ENCODE measurements at regions of chr18 and their contacts with region 1.

Region 1: DNA sequence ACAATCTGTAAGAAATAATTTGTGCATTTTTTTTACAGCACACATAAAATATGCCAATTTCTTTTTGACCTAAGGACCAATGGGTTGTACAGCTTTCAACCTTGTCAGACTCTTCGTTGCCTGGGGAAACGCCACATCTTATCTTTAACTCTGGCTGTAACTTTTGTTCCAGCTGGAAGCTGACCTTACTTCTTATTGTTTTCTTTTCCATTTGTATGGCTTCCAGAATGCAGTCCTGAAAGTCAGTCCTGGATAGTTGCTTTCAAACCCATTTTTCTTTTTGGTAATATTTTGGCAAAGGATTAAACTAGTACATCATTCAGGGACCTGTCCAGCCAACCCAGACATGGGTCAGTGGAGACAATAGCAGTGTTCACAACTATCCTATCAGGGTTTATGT is 686.5 kb upstream of the CDH2 start:
- DNase-seq: no peak
- ATAC-seq: no peak
- H3K4me3 ChIP-seq: no peak overlapping the region
- H3K4me3 Mint-ChIP-seq: no peak overlapping the region
- H3K27ac ChIP-seq: no peak overlapping the region
- H3K27ac Mint-ChIP-seq: no peak overlapping the region
- H3K4me1 ChIP-seq: no peaks in the 10 kb centered on the region
- H3K4me1 Mint-ChIP-seq: no peaks in the 10 kb centered on the region
- H3K27me3 ChIP-seq: no peaks in the 10 kb centered on the region
- H3K27me3 Mint-ChIP-seq: no peaks in the 10 kb centered on the region
- CTCF ChIP-seq: no peak

Region 2: DNA sequence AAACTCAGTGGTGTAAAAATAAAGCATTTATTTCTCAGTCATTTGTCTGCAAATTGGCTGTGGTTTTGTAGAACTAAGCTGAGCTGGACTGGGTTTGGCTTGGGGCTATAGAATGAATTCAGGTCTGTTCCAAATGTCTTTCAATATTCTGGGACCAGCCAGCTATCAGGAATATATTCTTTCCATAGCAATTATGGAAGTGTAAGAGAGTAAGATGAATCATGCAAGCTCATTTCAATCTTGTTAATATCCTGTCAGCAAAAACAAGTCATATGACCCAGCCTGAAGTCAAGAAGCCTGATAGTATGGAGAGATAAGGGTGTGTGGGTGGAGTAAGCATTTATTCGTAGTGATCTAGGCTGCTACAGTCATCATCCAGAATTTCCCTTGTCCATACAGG is 205.4 kb before region 1 on chr18:
- CTCF ChIA-PET with region 1: no interaction called
- POLR2A ChIA-PET with region 1: no interaction called
- intact Hi-C with region 1: no loop called
- DNase-seq: no peak
- ATAC-seq: no peak
- H3K4me3 ChIP-seq: no peak overlapping the region
- H3K4me3 Mint-ChIP-seq: no peak overlapping the region
- H3K27ac ChIP-seq: no peak overlapping the region
- H3K27ac Mint-ChIP-seq: no peak overlapping the region
- H3K4me1 ChIP-seq: no peaks in the 10 kb centered on the region
- H3K4me1 Mint-ChIP-seq: no peaks in the 10 kb centered on the region
- H3K27me3 ChIP-seq: no peaks in the 10 kb centered on the region
- H3K27me3 Mint-ChIP-seq: no peaks in the 10 kb centered on the region
- CTCF ChIP-seq: no peak

Region 3: GRCh38 chr18:28816155-28816554 is 47.2 kb before region 1 on chr18:
- CTCF ChIA-PET with region 1: no interaction called
- POLR2A ChIA-PET with region 1: no interaction called
- intact Hi-C with region 1: loop called in 1 of 2 experiments (anchors 10 kb)
- DNase-seq: no peak
- ATAC-seq: no peak
- H3K4me3 ChIP-seq: no peak overlapping the region
- H3K4me3 Mint-ChIP-seq: no peak overlapping the region
- H3K27ac ChIP-seq: no peak overlapping the region
- H3K27ac Mint-ChIP-seq: no peak overlapping the region
- H3K4me1 ChIP-seq: no peaks in the 10 kb centered on the region
- H3K4me1 Mint-ChIP-seq: no peaks in the 10 kb centered on the region
- H3K27me3 ChIP-seq: no peaks in the 10 kb centered on the region
- H3K27me3 Mint-ChIP-seq: no peaks in the 10 kb centered on the region
- CTCF ChIP-seq: no peak

Region 4: GRCh38 chr18:29377346-29377745 is 514.0 kb after region 1 on chr18:
- CTCF ChIA-PET with region 1: no interaction called
- POLR2A ChIA-PET with region 1: no interaction called
- intact Hi-C with region 1: no loop called
- DNase-seq: no peak
- ATAC-seq: no peak
- H3K4me3 ChIP-seq: no peak overlapping the region
- H3K4me3 Mint-ChIP-seq: no peak overlapping the region
- H3K27ac ChIP-seq: no peak overlapping the region
- H3K27ac Mint-ChIP-seq: no peak overlapping the region
- H3K4me1 ChIP-seq: no peaks in the 10 kb centered on the region
- H3K4me1 Mint-ChIP-seq: no peaks in the 10 kb centered on the region
- H3K27me3 ChIP-seq: no peaks in the 10 kb centered on the region
- H3K27me3 Mint-ChIP-seq: no peaks in the 10 kb centered on the region
- CTCF ChIP-seq: no peak

Measured in CD4-positive, alpha-beta T cell (primary cell).